A549 (cell line): ENCODE measurements at regions of chr2 and their contacts with region 1.

Region 1: DNA sequence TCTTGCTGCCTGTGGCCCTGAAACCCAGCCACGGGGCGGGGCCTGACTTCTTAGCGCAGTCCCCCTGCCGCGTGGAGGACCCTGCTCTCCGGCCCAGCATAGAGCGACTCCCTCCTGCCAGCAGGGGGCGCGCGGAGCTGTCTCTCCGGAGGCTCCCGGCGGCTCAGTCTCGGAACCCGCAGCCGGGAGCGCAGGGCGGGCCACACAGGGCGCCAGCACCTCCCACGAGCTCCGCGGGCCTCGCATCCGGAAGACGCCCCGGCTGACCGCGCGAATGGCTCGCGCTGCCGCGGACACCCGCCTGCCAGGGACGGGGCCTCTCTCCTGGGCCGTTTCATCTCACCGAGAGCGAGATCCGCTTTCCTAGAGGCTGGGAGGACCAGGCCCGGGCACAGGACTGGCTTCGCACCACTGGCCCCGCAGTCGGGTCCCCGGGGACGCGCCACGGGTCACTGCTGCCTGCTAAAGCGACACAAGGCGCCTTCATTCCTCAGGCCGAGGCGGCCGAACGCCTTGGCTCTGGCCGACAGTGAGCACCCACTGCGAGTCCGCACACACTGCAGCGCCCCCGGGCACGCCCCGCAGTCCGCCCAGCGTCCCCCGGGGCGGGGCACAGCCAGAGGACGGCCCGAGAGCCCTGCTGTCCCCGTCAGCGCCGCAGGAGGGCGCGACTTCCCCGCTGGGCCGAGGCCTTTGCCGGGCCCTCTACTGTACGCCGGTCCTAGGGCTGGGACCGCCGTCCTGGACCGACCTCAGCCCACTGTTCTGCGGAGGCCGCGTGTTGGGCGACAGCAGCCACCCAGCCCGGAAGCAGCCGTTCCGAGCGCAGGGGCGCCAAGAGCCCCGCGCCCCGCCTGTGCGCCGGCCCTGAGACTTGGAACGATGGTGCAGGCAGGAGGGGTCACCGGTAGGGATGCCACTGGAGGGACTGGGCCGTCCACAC is 39.0 kb upstream of the ARHGEF4 start:
- DNase-seq: peak; percentile 81 to 83
- ATAC-seq: peak; percentile 92 to 97
- H3K4me3 ChIP-seq: peak overlapping the region; percentile 66
- H3K27ac ChIP-seq: peak overlapping the region; percentile 84 to 95
- H3K4me1 ChIP-seq: peaks cover 4% of the 10 kb centered on the region; the same call in 1 of the 3 replicates
- CTCF ChIP-seq: peak; percentile 87
- EP300 ChIP-seq: no peak
- POLR2A ChIP-seq: peak; percentile 82
- RAD21 ChIP-seq: peak; percentile 84 to 93

Region 2: GRCh38 chr2:130808482-130809275 is 10.9 kb after region 1 on chr2:
- CTCF ChIA-PET with region 1: interaction called, 31 read pairs
- POLR2A ChIA-PET with region 1: no interaction called
- DNase-seq: peak in 1 of 2 experiments; percentile 42
- ATAC-seq: peak in 1 of 2 experiments; percentile 47; a peak in 1 of 6 replicates
- H3K4me3 ChIP-seq: no peak overlapping the region
- H3K27ac ChIP-seq: no peak overlapping the region
- H3K4me1 ChIP-seq: peaks cover 7% of the 10 kb centered on the region; the same call in 1 of the 3 replicates
- CTCF ChIP-seq: no peak
- EP300 ChIP-seq: no peak
- POLR2A ChIP-seq: no peak
- RAD21 ChIP-seq: no peak

Region 3: DNA sequence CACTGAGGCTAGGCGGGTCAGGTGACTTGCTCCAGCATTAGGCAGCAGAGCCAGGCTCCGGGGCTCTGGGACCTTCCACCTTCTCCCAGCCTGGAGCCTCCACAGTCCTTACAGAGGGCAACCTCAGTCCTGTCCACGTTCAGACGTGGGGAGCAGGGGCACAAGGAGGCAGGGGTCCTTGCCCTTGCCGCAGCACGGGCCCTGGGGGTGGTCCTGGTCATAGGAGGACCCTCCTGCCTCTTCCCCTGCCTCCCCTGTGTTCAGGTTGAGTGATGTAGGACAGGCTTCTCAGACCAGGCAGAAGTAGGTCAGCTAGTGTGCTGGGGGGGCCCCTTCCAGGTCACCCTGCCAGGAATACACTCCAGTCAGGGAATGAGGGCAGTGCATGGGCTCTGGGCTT is 33.6 kb after region 1 on chr2:
- CTCF ChIA-PET with region 1: interaction called, 21 read pairs
- POLR2A ChIA-PET with region 1: no interaction called
- DNase-seq: no peak
- ATAC-seq: no peak
- H3K4me3 ChIP-seq: no peak overlapping the region
- H3K27ac ChIP-seq: peak overlapping the region in 1 of 2 experiments; percentile 45; a peak in 2 of 6 replicates
- H3K4me1 ChIP-seq: peaks cover 31% of the 10 kb centered on the region
- CTCF ChIP-seq: no peak
- EP300 ChIP-seq: no peak
- POLR2A ChIP-seq: no peak
- RAD21 ChIP-seq: no peak

Region 4: GRCh38 chr2:130873700-130874346 is 76.1 kb after region 1 on chr2:
- CTCF ChIA-PET with region 1: interaction called, 263 read pairs
- POLR2A ChIA-PET with region 1: interaction called, 3 read pairs
- DNase-seq: peak; percentile 61 to 75
- ATAC-seq: peak; percentile 88 to 93
- H3K4me3 ChIP-seq: no peak overlapping the region
- H3K27ac ChIP-seq: no peak overlapping the region
- H3K4me1 ChIP-seq: no peaks in the 10 kb centered on the region
- CTCF ChIP-seq: peak; percentile 74
- EP300 ChIP-seq: no peak
- POLR2A ChIP-seq: no peak
- RAD21 ChIP-seq: peak; percentile 76 to 77

Region 5: DNA sequence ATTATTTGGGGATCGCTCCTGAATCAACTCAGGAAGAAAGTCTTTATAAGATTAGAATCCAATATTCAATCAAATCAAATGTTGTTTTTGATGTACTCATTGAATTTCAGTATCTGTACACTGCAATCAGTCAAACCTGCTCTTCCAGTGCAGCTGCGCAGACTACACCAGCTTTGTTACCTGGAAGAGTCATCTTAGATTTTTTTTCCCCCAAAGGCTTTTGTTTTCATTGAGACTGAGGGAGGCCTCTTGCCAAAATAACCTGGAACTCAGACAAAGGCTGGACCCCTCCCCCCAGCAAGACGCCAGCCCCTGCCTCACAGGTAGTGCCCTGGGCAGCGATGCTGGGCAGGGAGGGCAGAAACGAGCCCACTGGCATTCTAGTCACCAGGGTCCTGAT is 113.7 kb after region 1 on chr2:
- CTCF ChIA-PET with region 1: interaction called, 13 read pairs
- POLR2A ChIA-PET with region 1: no interaction called
- DNase-seq: no peak
- ATAC-seq: no peak
- H3K4me3 ChIP-seq: no peak overlapping the region
- H3K27ac ChIP-seq: no peak overlapping the region
- H3K4me1 ChIP-seq: no peaks in the 10 kb centered on the region
- CTCF ChIP-seq: no peak
- EP300 ChIP-seq: no peak
- POLR2A ChIP-seq: no peak
- RAD21 ChIP-seq: no peak